ENCODE measurements at regions of chr12 and their contacts with region 1.

Region 1: GRCh38 chr12:111298582-111299436 is 70.1 kb downstream of the PHETA1 start:
- DNase-seq: peak; percentile 57 to 75 (median 69)
- H3K4me3 ChIP-seq: no peak overlapping the region
- H3K27ac ChIP-seq: no peak overlapping the region
- H3K4me1 ChIP-seq: no peaks in the 10 kb centered on the region
- H3K27me3 ChIP-seq: peaks cover 0 to under 1% (median 0%) of the 10 kb centered on the region in 5 experiments

Region 2: DNA sequence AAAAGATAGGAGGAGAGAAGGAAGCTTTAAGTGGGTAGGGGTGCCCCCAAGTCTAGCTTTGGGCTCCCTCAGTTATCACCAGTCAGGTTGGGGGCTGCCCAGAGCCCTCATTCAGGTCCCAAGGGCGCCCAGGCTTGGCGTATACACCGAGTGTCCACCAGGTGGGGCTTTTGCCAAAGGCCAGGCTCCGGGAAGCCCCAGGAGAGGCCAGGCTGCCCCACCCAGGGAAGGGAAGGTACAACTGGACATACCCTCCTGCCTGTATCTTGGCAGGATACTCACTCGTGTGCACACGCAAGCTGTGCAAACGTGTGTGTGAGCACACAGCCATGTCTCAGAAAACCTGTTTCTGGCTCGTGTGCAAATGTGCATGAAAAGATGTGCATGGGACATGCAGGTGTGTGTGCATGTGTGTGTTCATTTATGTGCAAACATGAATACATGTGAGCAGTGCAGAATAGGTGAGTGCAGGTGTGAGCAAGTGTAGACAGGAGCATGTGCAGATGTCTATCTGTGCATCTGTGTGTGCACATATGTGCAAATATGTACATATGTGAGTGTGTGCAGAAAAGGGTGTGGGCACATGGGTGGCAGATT is 274.5 kb before region 1 on chr12:
- CTCF ChIA-PET with region 1: interaction called, 31 read pairs
- POLR2A ChIA-PET with region 1: no interaction called
- DNase-seq: peak; percentile 31 to 53 (median 43)
- H3K4me3 ChIP-seq: no peak overlapping the region
- H3K27ac ChIP-seq: no peak overlapping the region
- H3K4me1 ChIP-seq: no peaks in the 10 kb centered on the region
- H3K27me3 ChIP-seq: peaks cover 0 to 43% (median 12%) of the 10 kb centered on the region in 5 experiments

Region 3: GRCh38 chr12:111149299-111149698 is 149.5 kb before region 1 on chr12:
- CTCF ChIA-PET with region 1: interaction called, 10 read pairs
- POLR2A ChIA-PET with region 1: no interaction called
- DNase-seq: peak; percentile 17 to 49 (median 45)
- H3K4me3 ChIP-seq: no peak overlapping the region
- H3K27ac ChIP-seq: no peak overlapping the region
- H3K4me1 ChIP-seq: peaks cover 0 to 15% (median 7%) of the 10 kb centered on the region in 4 experiments
- H3K27me3 ChIP-seq: peaks cover 0 to 2% (median 0%) of the 10 kb centered on the region in 5 experiments

Region 4: DNA sequence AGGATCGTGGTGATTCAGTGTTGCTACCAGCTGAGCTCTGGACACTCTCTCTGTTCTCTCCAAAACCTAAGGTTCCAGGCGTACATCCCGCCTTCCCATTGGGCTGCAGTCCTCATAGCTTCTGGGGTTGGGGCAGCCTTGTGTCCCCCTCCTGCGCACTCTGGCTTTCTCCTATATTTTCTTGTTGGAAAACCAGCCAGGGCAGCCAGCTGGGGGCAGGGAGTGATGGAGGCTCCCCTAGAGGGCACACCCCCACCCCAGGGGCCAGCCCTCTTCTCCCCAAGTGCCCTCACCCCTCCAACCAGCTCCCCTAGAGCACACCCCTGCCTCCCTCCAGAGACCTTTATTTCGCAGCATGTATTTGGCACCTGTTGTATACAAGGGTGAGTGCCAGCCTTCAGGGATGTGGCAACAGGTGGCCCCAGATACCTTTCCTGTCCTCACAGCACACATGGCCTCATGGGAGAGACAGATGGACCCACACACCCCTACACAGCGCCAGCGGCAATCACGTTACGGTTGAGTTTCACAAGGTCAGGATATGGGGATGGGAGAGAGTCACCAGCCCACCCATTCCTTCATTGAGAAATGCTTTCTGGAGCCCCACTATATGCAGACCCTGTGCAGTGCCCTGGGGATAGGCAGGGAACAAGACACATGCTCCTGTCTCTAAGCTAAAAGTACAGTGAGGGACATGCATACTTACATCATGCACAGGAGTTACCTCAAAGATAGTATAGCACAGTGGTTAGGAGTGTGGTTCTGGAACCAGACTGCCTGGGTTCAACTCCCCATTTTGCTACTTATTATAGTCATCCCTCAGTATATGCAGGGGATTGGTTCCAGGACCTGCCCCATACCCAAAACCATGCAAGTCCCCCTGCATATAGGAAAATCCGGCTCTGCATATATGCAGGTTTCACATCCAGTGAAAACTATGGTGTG is 71.1 kb before region 1 on chr12:
- CTCF ChIA-PET with region 1: no interaction called
- POLR2A ChIA-PET with region 1: no interaction called
- DNase-seq: no peak
- H3K4me3 ChIP-seq: no peak overlapping the region
- H3K27ac ChIP-seq: no peak overlapping the region
- H3K4me1 ChIP-seq: peaks cover 0 to 18% (median 16%) of the 10 kb centered on the region in 4 experiments
- H3K27me3 ChIP-seq: peaks cover 0 to 3% (median 0%) of the 10 kb centered on the region in 5 experiments

Region 5: DNA sequence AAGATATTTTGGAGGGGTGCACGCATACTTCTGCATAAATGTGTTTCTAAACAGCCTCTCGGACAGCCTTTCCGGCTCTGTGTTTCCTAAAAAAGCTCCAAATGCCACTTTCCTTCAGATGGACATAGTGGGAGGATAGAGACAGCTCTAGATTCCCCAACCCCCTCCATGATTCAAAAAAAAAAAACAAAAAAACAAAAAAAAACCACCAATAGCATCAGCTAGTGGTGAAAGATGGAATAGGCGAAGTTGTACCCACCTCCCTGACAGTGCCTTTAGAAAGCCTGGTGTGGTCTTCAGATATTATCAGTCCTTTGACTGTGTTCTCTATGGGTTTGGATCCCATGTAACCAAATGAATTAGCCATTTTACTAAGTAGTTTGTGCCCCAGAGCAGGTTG is 24.0 kb before region 1 on chr12:
- CTCF ChIA-PET with region 1: interaction called, 14 read pairs
- POLR2A ChIA-PET with region 1: no interaction called
- DNase-seq: peak; percentile 14 to 30 (median 27)
- H3K4me3 ChIP-seq: no peak overlapping the region
- H3K27ac ChIP-seq: no peak overlapping the region
- H3K4me1 ChIP-seq: peaks cover 0 to 9% (median 0%) of the 10 kb centered on the region in 4 experiments
- H3K27me3 ChIP-seq: peaks cover 0 to 3% (median 0%) of the 10 kb centered on the region in 5 experiments

Region 6: GRCh38 chr12:111313833-111314259 is 15.0 kb after region 1 on chr12:
- CTCF ChIA-PET with region 1: interaction called, 17 read pairs
- POLR2A ChIA-PET with region 1: no interaction called
- DNase-seq: peak; percentile 75 to 84 (median 75)
- H3K4me3 ChIP-seq: no peak overlapping the region
- H3K27ac ChIP-seq: no peak overlapping the region
- H3K4me1 ChIP-seq: peaks cover 0 to 29% (median 6%) of the 10 kb centered on the region in 4 experiments
- H3K27me3 ChIP-seq: no peaks in the 10 kb centered on the region